ENCODE measurements at regions of chrX and their contacts with region 1.

Region 1: DNA sequence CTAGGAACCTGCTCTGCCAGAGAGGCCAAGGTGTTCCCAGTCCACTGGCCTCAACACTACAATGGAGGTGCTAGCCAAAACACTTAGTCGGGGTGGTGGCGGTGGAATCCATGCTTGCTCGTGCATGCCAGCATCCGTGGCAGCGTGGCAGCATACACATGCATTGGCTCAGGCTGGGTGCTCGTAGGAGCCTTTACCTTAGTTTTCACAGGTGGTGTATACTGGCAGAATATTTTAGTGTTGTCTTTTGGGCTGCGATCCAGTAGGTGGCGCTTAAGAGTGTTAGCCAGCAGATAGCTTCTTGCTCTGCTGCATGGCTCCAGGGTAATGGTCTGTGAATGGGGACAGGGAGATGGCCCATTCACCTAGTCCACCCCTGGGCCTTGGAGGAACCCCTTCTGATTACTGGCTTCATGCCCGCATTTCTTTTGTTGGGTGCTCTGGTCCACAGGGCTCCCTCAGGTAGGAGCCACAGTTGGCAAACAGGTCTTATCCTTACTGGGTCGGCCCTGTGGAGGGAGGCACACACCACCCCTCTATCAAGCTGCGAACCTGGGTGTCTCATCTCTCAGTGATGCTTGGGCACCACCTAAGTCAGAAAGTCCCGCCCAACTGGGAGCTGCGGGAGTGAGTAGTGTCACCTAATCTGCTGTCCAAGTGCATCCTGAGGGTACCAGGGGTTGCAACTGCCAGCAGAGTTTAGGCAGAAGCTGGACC is 40.0 kb downstream of the RIPPLY1 start:
- DNase-seq: peak; percentile 6 to 22 (median 19)
- H3K4me3 ChIP-seq: no peak overlapping the region
- H3K4me3 Mint-ChIP-seq: no peak overlapping the region
- H3K27ac ChIP-seq: no peak overlapping the region
- H3K27ac Mint-ChIP-seq: no peak overlapping the region
- H3K4me1 ChIP-seq: no peaks in the 10 kb centered on the region
- H3K4me1 Mint-ChIP-seq: no peaks in the 10 kb centered on the region
- H3K27me3 ChIP-seq: no peaks in the 10 kb centered on the region
- H3K27me3 Mint-ChIP-seq: no peaks in the 10 kb centered on the region

Region 2: DNA sequence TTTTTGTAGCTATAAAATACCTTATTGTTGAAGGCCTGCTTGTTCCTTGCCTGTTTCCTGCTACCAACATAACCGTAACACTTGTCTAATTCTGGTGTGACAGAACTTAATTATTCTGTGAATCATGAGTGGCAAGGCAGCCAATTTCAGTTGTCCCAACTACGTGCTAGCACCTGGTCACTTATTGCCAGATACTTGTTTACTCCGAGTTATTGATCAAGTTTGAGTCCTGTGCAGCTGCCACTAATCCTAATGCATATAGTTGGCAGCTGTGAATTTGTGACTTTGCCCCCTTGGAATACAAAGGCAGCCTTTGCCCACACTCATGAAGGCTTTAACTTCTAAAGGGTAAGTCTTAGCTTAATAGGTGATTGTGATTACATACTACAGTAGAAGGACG is 144.4 kb before region 1 on chrX:
- CTCF ChIA-PET with region 1: no interaction called
- POLR2A ChIA-PET with region 1: no interaction called
- intact Hi-C with region 1: no loop called
- DNase-seq: no peak
- H3K4me3 ChIP-seq: no peak overlapping the region
- H3K4me3 Mint-ChIP-seq: no peak overlapping the region
- H3K27ac ChIP-seq: no peak overlapping the region
- H3K27ac Mint-ChIP-seq: no peak overlapping the region
- H3K4me1 ChIP-seq: no peaks in the 10 kb centered on the region
- H3K4me1 Mint-ChIP-seq: no peaks in the 10 kb centered on the region
- H3K27me3 ChIP-seq: no peaks in the 10 kb centered on the region
- H3K27me3 Mint-ChIP-seq: peaks cover 4 to 8% of the 10 kb centered on the region in 2 donors

Region 3: GRCh38 chrX:106874075-106874474 is 10.9 kb after region 1 on chrX:
- CTCF ChIA-PET with region 1: interaction called, 10 read pairs
- POLR2A ChIA-PET with region 1: no interaction called
- intact Hi-C with region 1: no loop called
- DNase-seq: peak in 4 of 5 donors; percentile 17 to 26 (median 24)
- H3K4me3 ChIP-seq: no peak overlapping the region
- H3K4me3 Mint-ChIP-seq: no peak overlapping the region
- H3K27ac ChIP-seq: no peak overlapping the region
- H3K27ac Mint-ChIP-seq: no peak overlapping the region
- H3K4me1 ChIP-seq: no peaks in the 10 kb centered on the region
- H3K4me1 Mint-ChIP-seq: no peaks in the 10 kb centered on the region
- H3K27me3 ChIP-seq: no peaks in the 10 kb centered on the region
- H3K27me3 Mint-ChIP-seq: peaks cover under 1 to 3% of the 10 kb centered on the region in 2 donors

Measured in CD4-positive, alpha-beta memory T cell (primary cell).